Sigmoid colon (tissue), 7 donors: ENCODE measurements at regions of chr19 and their contacts with region 1.

Region 1: DNA sequence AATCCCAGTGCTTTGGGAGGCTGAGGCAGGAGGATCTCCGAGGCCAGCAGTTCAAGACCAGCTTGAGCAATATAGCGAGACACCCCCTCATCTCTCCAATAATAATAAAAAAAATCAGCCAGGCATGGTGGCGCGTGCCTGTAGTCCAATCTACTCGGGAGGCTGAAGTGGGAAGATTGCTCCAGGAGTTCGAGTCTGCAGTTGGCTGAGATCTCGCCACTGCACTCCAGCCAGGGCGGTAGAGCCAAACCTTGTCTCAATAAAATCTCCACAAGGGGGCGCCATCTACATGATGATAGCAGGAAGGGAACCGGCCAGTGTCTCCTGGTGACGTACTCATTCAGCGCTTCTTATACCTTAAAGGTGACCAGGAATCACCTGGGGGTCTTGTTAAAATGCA is 13.6 kb upstream of the C5AR1 start:
- DNase-seq: peak; percentile 79
- H3K4me3 ChIP-seq: no peak overlapping the region
- H3K27ac ChIP-seq: no peak overlapping the region
- H3K4me1 ChIP-seq: no peaks in the 10 kb centered on the region
- H3K27me3 ChIP-seq: no peaks in the 10 kb centered on the region
- CTCF ChIP-seq: peak; percentile 42 to 70 (median 64)
- EP300 ChIP-seq: no peak
- POLR2A ChIP-seq: no peak

Region 2: GRCh38 chr19:47391510-47392223 is 95.6 kb after region 1 on chr19:
- intact Hi-C with region 1: loop called (anchors 5 kb)
- DNase-seq: peak; percentile 81
- H3K4me3 ChIP-seq: no peak overlapping the region
- H3K27ac ChIP-seq: no peak overlapping the region
- H3K4me1 ChIP-seq: peaks cover 0 to 9% (median 0%) of the 10 kb centered on the region in 4 donors
- H3K27me3 ChIP-seq: peaks cover 0 to 4% (median 0%) of the 10 kb centered on the region in 3 donors
- CTCF ChIP-seq: peak; percentile 48 to 87 (median 68)
- EP300 ChIP-seq: no peak
- POLR2A ChIP-seq: no peak

Region 3: GRCh38 chr19:47428177-47428894 is 132.3 kb after region 1 on chr19:
- intact Hi-C with region 1: loop called (anchors 10 kb)
- DNase-seq: peak; percentile 96
- H3K4me3 ChIP-seq: peak overlapping the region in 2 of 4 donors; percentile 13 to 32
- H3K27ac ChIP-seq: peak overlapping the region; percentile 59 to 83 (median 72)
- H3K4me1 ChIP-seq: peaks cover 0 to 38% (median 33%) of the 10 kb centered on the region in 4 donors
- H3K27me3 ChIP-seq: peaks cover 3 to 62% (median 10%) of the 10 kb centered on the region in 3 donors
- CTCF ChIP-seq: no peak
- EP300 ChIP-seq: no peak
- POLR2A ChIP-seq: no peak